Activated B cell treated with CpG ODN at 0.5 μM for 24 hours (primary cell): ENCODE measurements at regions of chr12 and their contacts with region 1.

Region 1: GRCh38 chr12:14769969-14770495 is 33.2 kb downstream of the WBP11 start:
- DNase-seq: peak; percentile 91
- ATAC-seq: peak; percentile 56
- H3K4me3 Mint-ChIP-seq: peak overlapping the region; percentile 98
- H3K27ac Mint-ChIP-seq: peak overlapping the region; percentile 99
- H3K4me1 Mint-ChIP-seq: peaks cover 61% of the 10 kb centered on the region
- H3K27me3 Mint-ChIP-seq: no peaks in the 10 kb centered on the region
- CTCF ChIP-seq: no peak

Region 2: GRCh38 chr12:14239350-14239934 is 530.6 kb before region 1 on chr12:
- CTCF ChIA-PET with region 1: no interaction called
- POLR2A ChIA-PET with region 1: interaction called, 26 read pairs
- intact Hi-C with region 1: loop called (anchors 1 kb)
- DNase-seq: peak; percentile 48
- ATAC-seq: peak; percentile 82
- H3K4me3 Mint-ChIP-seq: peak overlapping the region; percentile 82
- H3K27ac Mint-ChIP-seq: peak overlapping the region; percentile 99
- H3K4me1 Mint-ChIP-seq: peaks cover 42% of the 10 kb centered on the region
- H3K27me3 Mint-ChIP-seq: no peaks in the 10 kb centered on the region
- CTCF ChIP-seq: no peak

Region 3: DNA sequence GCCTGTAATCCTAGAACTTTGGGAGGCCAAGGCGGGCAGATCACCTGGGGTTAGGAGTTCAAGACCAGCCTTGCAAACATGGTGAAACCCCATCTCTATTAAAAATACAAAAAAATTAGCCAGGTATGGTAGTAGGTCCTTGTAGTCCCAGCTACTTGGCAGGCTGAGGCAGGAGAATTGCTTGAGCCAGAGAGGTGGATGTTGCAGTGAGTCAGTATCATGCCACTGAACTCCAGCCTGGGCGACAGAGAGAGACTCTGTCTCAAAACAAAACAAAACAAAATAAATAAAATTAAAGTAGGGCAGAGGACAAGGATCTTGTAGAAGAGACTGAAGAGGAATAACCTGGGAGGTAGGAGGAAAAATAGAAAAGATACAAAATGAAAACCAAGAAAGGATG is 28.1 kb before region 1 on chr12:
- CTCF ChIA-PET with region 1: no interaction called
- POLR2A ChIA-PET with region 1: no interaction called
- intact Hi-C with region 1: loop called (anchors 2 kb)
- DNase-seq: no peak
- ATAC-seq: no peak
- H3K4me3 Mint-ChIP-seq: no peak overlapping the region
- H3K27ac Mint-ChIP-seq: no peak overlapping the region
- H3K4me1 Mint-ChIP-seq: peaks cover 7% of the 10 kb centered on the region
- H3K27me3 Mint-ChIP-seq: no peaks in the 10 kb centered on the region
- CTCF ChIP-seq: no peak

Region 4: GRCh38 chr12:14884458-14884878 is 114.4 kb after region 1 on chr12:
- CTCF ChIA-PET with region 1: no interaction called
- POLR2A ChIA-PET with region 1: interaction called, 9 read pairs
- intact Hi-C with region 1: loop called (anchors 2 kb)
- DNase-seq: peak; percentile 57
- ATAC-seq: peak; percentile 96
- H3K4me3 Mint-ChIP-seq: peak overlapping the region; percentile 66
- H3K27ac Mint-ChIP-seq: peak overlapping the region; percentile 76
- H3K4me1 Mint-ChIP-seq: peaks cover 55% of the 10 kb centered on the region
- H3K27me3 Mint-ChIP-seq: peaks cover 25% of the 10 kb centered on the region
- CTCF ChIP-seq: no peak

Region 5: GRCh38 chr12:14995583-14996425 is 225.8 kb after region 1 on chr12:
- CTCF ChIA-PET with region 1: interaction called, 3 read pairs
- POLR2A ChIA-PET with region 1: interaction called, 19 read pairs
- intact Hi-C with region 1: no loop called
- DNase-seq: no peak
- ATAC-seq: peak; percentile 35
- H3K4me3 Mint-ChIP-seq: no peak overlapping the region
- H3K27ac Mint-ChIP-seq: peak overlapping the region; percentile 24
- H3K4me1 Mint-ChIP-seq: peaks cover 48% of the 10 kb centered on the region
- H3K27me3 Mint-ChIP-seq: peaks cover 9% of the 10 kb centered on the region
- CTCF ChIP-seq: peak; percentile 46

Region 6: DNA sequence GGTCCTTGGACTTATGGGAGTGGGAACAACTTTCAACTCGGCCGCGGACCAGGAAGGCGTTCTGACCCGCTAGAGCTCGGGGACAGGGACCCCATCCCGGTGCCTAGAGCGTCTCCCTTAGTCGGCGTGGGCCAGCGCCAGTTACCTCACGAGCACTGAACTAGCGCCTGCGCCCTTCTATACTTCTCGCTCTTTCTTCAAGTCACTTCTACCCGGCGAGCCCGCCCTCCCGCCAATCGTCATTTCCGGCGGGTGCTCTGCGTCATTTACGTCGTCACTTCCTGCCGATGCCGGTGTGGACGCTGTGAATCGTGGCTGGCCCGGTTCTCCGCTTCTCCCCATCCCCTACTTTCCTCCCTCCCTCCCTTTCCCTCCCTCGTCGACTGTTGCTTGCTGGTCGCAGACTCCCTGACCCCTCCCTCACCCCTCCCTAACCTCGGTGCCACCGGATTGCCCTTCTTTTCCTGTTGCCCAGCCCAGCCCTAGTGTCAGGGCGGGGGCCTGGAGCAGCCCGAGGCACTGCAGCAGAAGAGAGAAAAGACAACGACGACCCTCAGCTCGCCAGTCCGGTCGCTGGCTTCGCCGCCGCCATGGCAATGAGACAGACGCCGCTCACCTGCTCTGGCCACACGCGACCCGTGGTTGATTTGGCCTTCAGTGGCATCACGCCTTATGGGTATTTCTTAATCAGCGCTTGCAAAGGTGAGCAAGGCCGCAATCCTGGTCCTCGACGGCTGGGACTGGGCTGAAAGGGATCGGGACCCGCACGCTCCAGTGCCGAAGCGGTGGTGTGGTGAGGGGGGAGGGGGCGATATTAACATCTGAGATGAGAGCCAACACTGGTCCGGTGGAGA is 1112.3 kb after region 1 on chr12 and contains the start of gene STRAP:
- CTCF ChIA-PET with region 1: no interaction called
- POLR2A ChIA-PET with region 1: no interaction called
- intact Hi-C with region 1: loop called (anchors 1 kb)
- DNase-seq: peak; percentile 95
- ATAC-seq: peak; percentile 94
- H3K4me3 Mint-ChIP-seq: peak within 1 kb of the TSS; percentile 99
- H3K27ac Mint-ChIP-seq: peak within 1 kb of the TSS; percentile 99
- H3K4me1 Mint-ChIP-seq: peaks cover 53% of the 10 kb centered on the region
- H3K27me3 Mint-ChIP-seq: no peaks in the 10 kb centered on the region
- CTCF ChIP-seq: no peak
- total RNA-seq, gene STRAP: 78.1 and 82.3 TPM in 2 replicates